B cell (primary cell): ENCODE measurements at regions of chr9 and their contacts with region 1.

Region 1: DNA sequence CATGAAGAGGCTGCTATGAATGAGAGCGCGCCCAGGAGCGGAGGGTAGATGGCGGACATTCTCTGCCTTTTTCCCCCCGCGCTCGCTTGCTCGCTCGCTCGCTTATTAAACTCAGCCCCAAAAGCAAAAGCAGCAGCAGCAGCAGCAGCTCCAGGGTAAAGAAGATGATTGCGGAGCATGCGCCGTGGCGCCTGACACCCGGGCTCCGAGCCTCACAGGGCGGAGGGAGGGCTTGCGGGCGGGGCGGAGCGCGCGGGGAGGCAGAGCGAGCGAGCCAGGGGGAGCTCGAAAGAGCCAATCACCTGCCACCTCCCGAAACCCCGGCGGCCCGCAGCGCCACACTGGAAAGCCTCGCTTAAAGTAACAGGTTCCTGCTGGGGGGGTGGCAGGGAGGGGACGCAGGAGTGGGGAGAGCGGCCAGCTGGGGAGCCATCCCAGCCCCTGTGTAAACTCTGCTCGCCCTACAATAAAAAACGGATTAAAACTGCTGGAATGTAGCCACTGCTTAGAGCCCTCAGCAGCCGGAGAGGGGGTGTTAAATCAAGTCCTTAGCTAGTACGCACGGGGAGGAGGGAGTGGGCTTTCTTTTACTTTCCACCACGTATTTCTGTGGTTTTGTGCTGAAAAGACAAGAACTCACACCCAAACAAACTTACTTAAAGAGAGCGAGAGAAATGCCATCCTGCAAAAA is at the start of gene MLLT3:
- DNase-seq: peak; percentile 94
- ATAC-seq: peak; percentile 89
- H3K4me3 ChIP-seq: peak within 1 kb of the TSS; percentile 74 to 96 (median 91)
- H3K4me3 Mint-ChIP-seq: peak within 1 kb of the TSS; percentile 92
- H3K27ac ChIP-seq: peak within 1 kb of the TSS; percentile 25 to 40
- H3K27ac Mint-ChIP-seq: peak within 1 kb of the TSS; percentile 92
- H3K4me1 ChIP-seq: peaks cover 23 to 41% of the 10 kb centered on the region in 2 donors
- H3K4me1 Mint-ChIP-seq: peaks cover 38% of the 10 kb centered on the region
- H3K27me3 ChIP-seq: peaks cover 0 to 15% (median 6%) of the 10 kb centered on the region in 4 experiments
- H3K27me3 Mint-ChIP-seq: peaks cover 18% of the 10 kb centered on the region
- CTCF ChIP-seq: no peak
- total RNA-seq, gene MLLT3: 3.2 and 3.4 TPM in 2 replicates

Region 2: DNA sequence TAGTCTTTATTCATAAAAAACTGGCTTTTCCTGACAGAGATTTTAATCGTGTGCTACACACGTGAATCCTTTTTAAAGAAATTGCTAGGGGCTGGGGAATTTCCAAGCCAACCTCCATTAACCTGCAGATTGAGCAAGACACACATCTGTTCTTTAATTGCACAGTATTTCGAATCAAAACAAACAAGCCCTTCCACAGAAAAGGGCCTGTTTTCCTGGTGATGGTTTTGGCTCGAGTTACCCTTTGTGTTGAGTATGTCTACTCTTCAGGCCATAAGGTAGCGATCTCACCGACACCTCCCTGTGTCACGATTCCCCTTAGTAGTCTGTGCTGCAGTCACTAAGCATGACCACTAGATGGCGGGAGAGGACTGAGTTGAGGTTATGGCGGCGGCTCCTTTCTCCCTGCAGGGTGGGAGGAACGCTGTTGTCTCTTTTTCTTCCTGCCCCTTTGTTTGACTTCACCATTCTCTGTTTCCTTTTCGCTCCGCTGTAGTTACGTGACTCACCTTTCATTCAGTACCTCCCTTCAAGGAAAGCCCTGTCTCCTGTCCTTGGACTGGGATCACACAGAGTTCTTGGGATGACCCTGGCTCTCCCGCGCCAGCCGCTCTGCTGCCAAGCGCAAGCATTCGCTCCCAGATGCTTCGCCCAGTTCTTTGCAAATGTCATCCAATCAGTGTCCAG is 696.5 kb before region 1 on chr9:
- CTCF ChIA-PET with region 1: interaction called, 11 read pairs
- POLR2A ChIA-PET with region 1: no interaction called
- intact Hi-C with region 1: loop called (anchors 2 kb)
- DNase-seq: peak; percentile 81
- ATAC-seq: peak; percentile 97
- H3K4me3 ChIP-seq: peak overlapping the region in 3 of 5 experiments; percentile 2 to 21 (median 4)
- H3K4me3 Mint-ChIP-seq: peak overlapping the region; percentile 20
- H3K27ac ChIP-seq: no peak overlapping the region
- H3K27ac Mint-ChIP-seq: no peak overlapping the region
- H3K4me1 ChIP-seq: peaks cover 8 to 10% of the 10 kb centered on the region in 2 donors
- H3K4me1 Mint-ChIP-seq: peaks cover 9% of the 10 kb centered on the region
- H3K27me3 ChIP-seq: peaks cover 0 to 9% (median 7%) of the 10 kb centered on the region in 4 experiments
- H3K27me3 Mint-ChIP-seq: peaks cover 20% of the 10 kb centered on the region
- CTCF ChIP-seq: peak; percentile 96

Region 3: GRCh38 chr9:20610591-20610990 is 11.9 kb before region 1 on chr9:
- CTCF ChIA-PET with region 1: interaction called, 15 read pairs
- POLR2A ChIA-PET with region 1: no interaction called
- intact Hi-C with region 1: no loop called
- DNase-seq: no peak
- ATAC-seq: no peak
- H3K4me3 ChIP-seq: no peak overlapping the region
- H3K4me3 Mint-ChIP-seq: no peak overlapping the region
- H3K27ac ChIP-seq: no peak overlapping the region
- H3K27ac Mint-ChIP-seq: no peak overlapping the region
- H3K4me1 ChIP-seq: no peaks in the 10 kb centered on the region
- H3K4me1 Mint-ChIP-seq: no peaks in the 10 kb centered on the region
- H3K27me3 ChIP-seq: peaks cover 0 to 4% (median 2%) of the 10 kb centered on the region in 4 experiments
- H3K27me3 Mint-ChIP-seq: peaks cover 18% of the 10 kb centered on the region
- CTCF ChIP-seq: no peak

Region 4: GRCh38 chr9:20884985-20885593 is 262.6 kb after region 1 on chr9:
- CTCF ChIA-PET with region 1: interaction called, 8 read pairs
- POLR2A ChIA-PET with region 1: no interaction called
- intact Hi-C with region 1: loop called (anchors 1 kb)
- DNase-seq: peak; percentile 45
- ATAC-seq: no peak
- H3K4me3 ChIP-seq: no peak overlapping the region
- H3K4me3 Mint-ChIP-seq: no peak overlapping the region
- H3K27ac ChIP-seq: no peak overlapping the region
- H3K27ac Mint-ChIP-seq: no peak overlapping the region
- H3K4me1 ChIP-seq: no peaks in the 10 kb centered on the region
- H3K4me1 Mint-ChIP-seq: no peaks in the 10 kb centered on the region
- H3K27me3 ChIP-seq: no peaks in the 10 kb centered on the region
- H3K27me3 Mint-ChIP-seq: no peaks in the 10 kb centered on the region
- CTCF ChIP-seq: peak; percentile 75

Region 5: DNA sequence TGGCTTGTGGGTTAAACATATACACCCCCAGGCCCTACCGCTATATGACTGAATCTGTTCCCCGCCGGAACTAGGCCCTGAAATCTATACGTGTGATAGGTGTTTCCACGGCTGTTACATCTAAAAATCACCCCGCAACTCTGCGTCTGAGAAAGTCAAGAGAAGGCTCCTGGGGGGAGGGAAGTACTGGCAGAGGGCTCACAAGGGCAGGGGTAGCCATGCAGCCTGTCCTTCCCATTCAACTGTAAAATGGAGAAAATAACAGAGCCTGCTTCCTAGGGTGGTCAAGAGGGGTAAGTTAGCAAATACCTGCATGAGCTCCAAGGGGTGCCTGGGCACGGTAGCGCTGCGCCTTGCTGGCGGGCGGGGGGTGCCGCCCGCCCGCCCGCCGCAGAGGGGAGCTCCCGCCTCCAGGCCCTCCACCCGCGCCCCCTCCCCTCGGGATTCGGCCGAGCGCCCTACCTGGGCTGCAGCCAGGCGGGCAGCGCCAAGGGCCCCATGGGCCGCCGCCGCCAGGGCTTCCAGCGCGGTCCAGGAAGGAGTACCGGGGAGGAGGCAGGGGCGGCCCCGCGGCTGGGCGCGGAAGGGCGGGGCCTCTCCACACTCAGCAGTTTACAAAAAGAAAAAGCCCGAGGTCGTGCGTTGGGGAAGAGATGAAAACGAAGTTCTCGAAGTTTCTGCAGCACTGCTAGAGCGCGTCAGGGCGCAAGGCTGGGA is 408.8 kb after region 1 on chr9 and contains the start of gene HACD4:
- CTCF ChIA-PET with region 1: no interaction called
- POLR2A ChIA-PET with region 1: no interaction called
- intact Hi-C with region 1: loop called (anchors 5 kb)
- DNase-seq: peak; percentile 61
- ATAC-seq: peak; percentile 83
- H3K4me3 ChIP-seq: peak within 1 kb of the TSS; percentile 56 to 79 (median 64)
- H3K4me3 Mint-ChIP-seq: peak within 1 kb of the TSS; percentile 82
- H3K27ac ChIP-seq: peak within 1 kb of the TSS; percentile 79 to 85
- H3K27ac Mint-ChIP-seq: peak within 1 kb of the TSS; percentile 79
- H3K4me1 ChIP-seq: peaks cover 11 to 13% of the 10 kb centered on the region in 2 donors
- H3K4me1 Mint-ChIP-seq: peaks cover 6% of the 10 kb centered on the region
- H3K27me3 ChIP-seq: no peaks in the 10 kb centered on the region
- H3K27me3 Mint-ChIP-seq: no peaks in the 10 kb centered on the region
- CTCF ChIP-seq: no peak
- total RNA-seq, gene HACD4: 3.9 and 5.7 TPM in 2 replicates

Region 6: DNA sequence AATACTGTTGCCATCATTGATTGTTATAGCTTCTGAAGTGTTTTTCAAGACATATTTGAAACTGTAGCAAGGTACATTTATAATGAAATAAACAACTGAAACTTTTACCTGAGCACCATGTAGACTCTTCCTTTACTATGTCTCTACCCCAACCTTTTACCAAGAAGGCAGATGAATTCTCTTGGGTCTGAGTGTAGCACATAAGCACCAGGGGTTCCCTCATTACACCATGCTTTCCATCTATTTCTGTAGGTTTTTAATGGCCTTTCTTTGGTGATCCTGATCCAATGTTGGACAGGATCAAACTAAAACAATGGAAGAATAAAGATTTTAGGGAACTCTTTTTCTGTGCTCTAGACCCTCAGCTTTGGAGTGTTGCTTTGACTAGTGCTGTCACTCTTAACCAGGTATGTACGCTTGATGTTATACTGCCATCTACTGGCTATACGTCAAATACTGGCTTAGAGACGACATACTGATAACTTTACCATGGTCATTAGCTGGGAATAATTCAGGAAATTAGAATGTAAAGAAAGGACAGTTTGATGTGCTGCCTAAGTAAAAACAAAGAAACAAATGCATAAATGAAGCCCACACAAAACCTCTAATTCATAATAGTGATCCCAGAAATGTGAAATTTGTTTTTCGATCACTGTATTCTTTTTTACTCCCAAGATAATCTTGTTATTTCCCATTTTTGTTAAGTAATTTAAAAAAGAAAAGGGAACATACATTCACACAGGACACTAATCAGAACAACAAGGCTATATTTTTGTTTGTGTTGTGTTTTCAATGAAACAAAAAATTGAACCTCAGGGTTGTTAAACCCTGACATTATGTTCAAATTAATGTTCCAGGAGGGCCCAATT is 488.5 kb after region 1 on chr9:
- CTCF ChIA-PET with region 1: interaction called, 10 read pairs
- POLR2A ChIA-PET with region 1: no interaction called
- intact Hi-C with region 1: loop called (anchors 2 kb)
- DNase-seq: peak; percentile 74
- ATAC-seq: peak; percentile 47
- H3K4me3 ChIP-seq: no peak overlapping the region
- H3K4me3 Mint-ChIP-seq: no peak overlapping the region
- H3K27ac ChIP-seq: no peak overlapping the region
- H3K27ac Mint-ChIP-seq: no peak overlapping the region
- H3K4me1 ChIP-seq: no peaks in the 10 kb centered on the region
- H3K4me1 Mint-ChIP-seq: no peaks in the 10 kb centered on the region
- H3K27me3 ChIP-seq: no peaks in the 10 kb centered on the region
- H3K27me3 Mint-ChIP-seq: peaks cover 3% of the 10 kb centered on the region
- CTCF ChIP-seq: peak; percentile 93